Ascending aorta (tissue), 2 donors: ENCODE measurements at regions of chr4 and their contacts with region 1.

Region 1: DNA sequence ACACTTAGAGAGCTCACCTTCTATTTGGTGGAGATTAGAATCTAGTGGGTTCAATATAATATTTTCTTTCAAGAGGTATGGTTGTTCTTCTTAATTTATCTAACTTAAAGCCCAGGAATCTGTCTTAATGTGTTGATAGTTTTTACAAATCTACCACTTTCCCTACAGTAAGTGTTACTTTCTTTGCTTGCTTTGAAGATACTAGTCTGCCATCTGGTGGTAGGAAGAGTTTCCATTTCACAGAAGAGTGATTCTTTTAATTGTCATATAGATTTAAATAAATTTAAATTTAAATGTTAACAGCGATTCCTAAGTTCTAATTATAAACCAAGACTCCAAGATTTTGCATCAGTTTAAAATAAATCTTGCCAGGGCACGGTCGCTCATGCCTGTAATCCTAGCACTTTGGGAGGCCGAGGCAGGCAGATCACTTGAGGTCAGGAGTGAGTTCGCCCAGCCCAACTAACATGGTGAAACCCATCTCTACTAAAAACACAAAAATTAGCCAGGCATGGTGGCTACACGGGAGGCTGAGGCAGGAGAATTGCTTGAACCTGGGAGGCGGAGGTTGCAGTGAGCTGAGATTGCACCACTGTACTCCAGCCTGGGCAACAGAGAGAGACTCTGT is 43.5 kb downstream of the NUDT9 start:
- DNase-seq: no peak
- H3K4me3 ChIP-seq: no peak overlapping the region
- H3K27ac ChIP-seq: no peak overlapping the region
- H3K4me1 ChIP-seq: no peaks in the 10 kb centered on the region
- H3K27me3 ChIP-seq: no peaks in the 10 kb centered on the region
- CTCF ChIP-seq: peak; percentile 34 to 57 (median 40)

Region 2: GRCh38 chr4:87270144-87270543 is 195.7 kb before region 1 on chr4:
- intact Hi-C with region 1: loop called (anchors 10 kb)
- DNase-seq: no peak
- H3K4me3 ChIP-seq: no peak overlapping the region
- H3K27ac ChIP-seq: no peak overlapping the region
- H3K4me1 ChIP-seq: no peaks in the 10 kb centered on the region
- H3K27me3 ChIP-seq: no peaks in the 10 kb centered on the region
- CTCF ChIP-seq: peak; percentile 27 to 47 (median 35)